Upper lobe of right lung (tissue), 1 donor: ENCODE measurements at regions of chr19 and their contacts with region 1.

Region 1: DNA sequence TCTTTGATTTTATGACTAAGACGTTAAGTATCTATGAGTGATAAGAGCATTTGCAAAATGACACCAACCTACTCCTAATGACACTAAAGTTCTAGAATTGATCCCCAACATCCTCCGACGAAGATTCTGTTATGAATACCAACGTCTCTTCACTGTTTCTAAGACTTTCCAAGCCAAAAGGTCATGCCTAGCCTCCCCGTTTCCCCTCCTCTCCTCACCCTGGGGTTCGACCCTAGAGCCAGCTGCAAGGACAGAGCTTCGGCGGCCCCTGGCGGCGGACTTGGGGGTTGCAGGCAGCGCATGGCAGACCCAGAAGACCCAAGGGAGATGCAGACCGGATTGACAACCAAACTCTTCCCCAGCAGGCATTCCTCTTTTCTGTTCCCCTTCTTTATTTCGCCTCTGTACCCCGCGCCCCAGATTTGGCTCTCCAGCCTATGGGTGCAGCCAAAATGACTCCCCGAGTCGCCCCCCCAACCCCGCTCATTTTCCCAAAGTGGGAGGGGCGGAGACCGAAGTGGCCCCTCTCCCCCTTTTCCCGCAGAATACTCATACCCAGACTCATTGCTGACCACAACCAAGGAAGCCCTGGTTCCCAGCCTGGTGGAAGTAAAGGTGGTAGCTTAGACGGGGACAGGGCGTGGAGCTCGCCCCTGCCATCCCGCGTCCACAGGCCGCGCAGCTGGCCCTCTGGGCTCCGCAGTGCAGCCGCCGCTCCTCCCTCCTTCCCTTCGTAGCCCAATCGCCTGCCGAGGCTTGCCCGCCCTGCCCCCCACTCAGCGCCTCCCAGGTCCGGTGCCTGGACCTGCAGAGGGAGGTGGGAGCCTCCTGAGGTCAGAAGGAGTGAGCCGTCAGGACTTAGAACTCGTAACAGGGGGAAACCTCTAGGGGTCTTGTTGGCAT is 4.1 kb upstream of the EML2 start:
- DNase-seq: peak; percentile 91
- ATAC-seq: peak; percentile 65
- H3K4me3 ChIP-seq: peak overlapping the region; percentile 53
- H3K27ac ChIP-seq: no peak overlapping the region
- H3K4me1 ChIP-seq: peaks cover 55% of the 10 kb centered on the region
- H3K27me3 ChIP-seq: no peaks in the 10 kb centered on the region
- CTCF ChIP-seq: peak; percentile 99

Region 2: DNA sequence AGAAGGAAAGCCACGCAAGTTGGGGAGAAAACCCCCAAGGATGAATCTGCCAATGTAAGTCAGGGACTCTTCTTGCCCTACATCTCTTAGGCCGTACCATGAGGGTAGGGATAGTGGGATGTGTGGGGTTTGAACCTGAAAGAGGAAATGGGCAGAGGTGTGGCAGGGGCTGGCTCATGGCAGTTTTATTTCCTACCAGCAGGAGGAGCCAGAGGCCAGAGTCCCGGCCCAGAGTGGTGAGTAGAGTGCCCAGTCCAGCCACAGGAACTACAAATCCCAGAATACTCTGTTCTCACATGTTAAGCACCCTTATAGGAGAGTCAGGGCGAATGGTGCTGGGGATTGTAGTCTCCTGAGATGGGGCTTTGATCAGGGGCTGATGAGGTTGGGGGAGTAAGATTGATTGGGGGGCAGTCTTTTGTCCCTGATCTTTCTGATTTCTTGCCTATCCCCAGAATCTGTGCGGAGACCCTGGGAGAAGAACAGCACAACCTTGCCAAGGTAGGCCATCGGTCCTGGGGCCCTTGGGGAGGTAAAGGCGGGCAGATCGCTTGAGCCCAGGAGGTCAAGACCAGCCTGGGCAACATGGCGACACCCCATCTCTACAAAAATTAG is 119.5 kb before region 1 on chr19:
- intact Hi-C with region 1: loop called (anchors 10 kb)
- DNase-seq: peak; percentile 82
- ATAC-seq: peak; percentile 97
- H3K4me3 ChIP-seq: no peak overlapping the region
- H3K27ac ChIP-seq: no peak overlapping the region
- H3K4me1 ChIP-seq: no peaks in the 10 kb centered on the region
- H3K27me3 ChIP-seq: no peaks in the 10 kb centered on the region
- CTCF ChIP-seq: peak; percentile 92

Region 3: DNA sequence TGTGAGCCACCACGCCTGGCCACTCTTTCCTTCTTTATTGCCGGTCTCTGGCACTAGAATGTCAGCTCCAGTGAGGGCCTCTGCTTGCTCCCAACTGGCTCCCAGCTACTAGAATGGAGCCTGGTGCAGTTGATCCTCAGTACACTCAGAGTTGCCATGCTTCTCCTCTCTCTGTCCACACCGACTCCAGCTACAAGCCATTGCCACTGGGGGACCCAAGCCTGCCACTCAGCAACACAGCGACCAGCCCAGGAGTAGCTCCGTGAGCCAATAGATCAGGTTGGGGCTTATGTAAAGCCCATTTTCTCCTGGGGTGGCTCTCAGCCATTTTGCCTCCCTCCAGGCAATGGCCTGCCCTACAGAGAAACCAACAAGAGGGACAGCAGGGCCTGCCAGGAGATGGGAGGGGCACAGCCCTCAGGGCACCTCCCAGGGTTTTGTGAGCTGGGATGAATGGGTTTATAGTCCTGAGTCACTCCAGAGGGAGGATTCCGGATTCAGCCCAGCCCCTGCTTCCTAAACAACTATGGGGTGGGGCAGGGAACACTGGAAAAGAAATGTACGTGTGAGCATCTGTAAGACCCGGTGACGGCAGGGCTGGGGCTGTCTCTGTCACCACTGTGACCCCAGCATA is 95.2 kb before region 1 on chr19:
- intact Hi-C with region 1: no loop called
- DNase-seq: no peak
- ATAC-seq: peak; percentile 68
- H3K4me3 ChIP-seq: no peak overlapping the region
- H3K27ac ChIP-seq: peak overlapping the region; percentile 17
- H3K4me1 ChIP-seq: peaks cover 3% of the 10 kb centered on the region
- H3K27me3 ChIP-seq: no peaks in the 10 kb centered on the region
- CTCF ChIP-seq: no peak

Region 4: DNA sequence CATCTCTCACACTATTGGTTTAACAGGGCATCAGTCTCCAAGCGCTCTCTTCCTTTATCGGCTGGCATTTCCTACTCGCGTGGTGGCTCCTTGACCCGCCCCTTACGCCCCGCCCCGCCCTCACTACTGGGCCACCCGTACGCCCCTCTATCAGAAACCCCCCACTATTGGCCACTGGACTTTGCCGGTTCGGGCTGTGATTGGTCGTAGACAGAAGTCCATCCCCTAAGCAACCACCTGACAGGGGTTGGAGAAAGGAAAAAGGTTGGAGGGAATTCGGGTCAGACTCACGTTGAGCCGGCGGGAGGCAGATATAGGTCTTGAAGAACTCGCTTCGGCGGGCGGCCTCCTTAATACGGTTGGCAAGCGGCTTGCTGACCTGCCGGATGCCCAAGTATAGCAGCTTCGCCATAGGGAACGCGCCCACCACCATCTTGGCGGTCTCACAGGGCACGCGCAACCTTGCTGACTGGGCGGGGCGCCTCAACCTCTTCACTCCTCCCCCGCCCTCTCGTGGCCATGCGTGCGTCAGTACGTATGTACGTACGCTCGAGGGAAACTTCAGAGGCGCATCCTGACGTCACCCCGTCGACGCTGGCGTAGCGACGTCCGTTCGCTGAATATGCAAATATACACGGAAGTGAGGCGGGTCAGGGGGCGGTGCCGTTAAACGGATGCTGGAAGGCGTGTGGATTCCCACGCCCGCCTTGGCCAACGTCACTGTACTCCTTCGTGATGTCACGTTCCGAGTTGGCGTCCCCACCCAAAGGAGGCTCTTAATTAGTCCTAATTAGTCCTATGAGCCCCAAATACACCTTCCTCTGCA is 58.7 kb before region 1 on chr19 and contains the start of gene OPA3:
- intact Hi-C with region 1: no loop called
- DNase-seq: peak; percentile 100
- ATAC-seq: peak; percentile 95
- H3K4me3 ChIP-seq: peak within 1 kb of the TSS; percentile 83
- H3K27ac ChIP-seq: peak within 1 kb of the TSS; percentile 93
- H3K4me1 ChIP-seq: peaks cover 12% of the 10 kb centered on the region
- H3K27me3 ChIP-seq: no peaks in the 10 kb centered on the region
- CTCF ChIP-seq: peak; percentile 25
- total RNA-seq, gene OPA3: 13.0 TPM

Region 5: DNA sequence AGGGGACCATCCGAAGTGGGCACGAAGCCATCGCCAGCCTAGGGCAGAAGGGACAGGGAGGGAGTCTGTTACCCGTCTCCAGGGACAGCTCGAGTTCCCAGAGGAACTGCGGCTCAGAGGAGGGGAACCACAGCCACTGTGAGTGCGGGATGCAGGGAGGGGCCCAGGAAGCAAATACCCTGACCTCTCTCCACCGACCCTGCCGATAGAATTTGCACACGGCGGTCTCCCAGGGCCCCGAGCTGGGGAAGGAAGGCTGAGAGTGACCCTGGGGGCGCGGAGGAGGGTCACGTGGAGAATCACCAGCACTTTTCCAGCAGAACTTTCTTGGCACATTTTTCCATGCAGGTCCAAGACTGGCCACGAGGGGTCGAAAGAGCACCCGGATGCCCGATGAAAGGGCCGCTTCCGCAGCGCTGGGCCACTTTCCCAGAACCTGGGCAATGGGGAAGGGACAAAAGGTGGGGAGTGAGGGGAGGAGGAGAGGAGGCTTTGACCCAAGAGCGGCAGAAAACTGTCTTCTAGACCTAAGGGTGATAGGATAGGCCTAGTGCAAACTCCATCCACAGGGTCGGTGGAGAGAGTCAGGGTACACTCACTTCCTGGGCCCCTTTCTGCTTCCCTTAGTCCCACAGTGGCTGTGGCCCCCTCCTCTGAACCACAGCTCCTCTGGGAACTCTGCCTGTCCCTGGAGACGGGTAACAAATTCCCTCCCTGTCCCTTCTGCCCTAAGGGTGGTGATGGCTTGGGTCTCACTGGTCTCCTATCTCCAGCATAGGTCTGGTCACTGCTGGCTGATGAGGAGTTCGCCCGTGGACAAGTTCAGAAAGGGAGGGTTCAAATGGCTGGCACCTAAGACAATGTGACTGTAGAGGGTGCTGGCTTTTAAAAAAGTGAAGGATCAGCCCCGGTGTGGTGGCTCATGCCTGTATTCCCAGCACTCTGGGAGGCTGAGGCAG is 35.9 kb before region 1 on chr19:
- intact Hi-C with region 1: loop called (anchors 5 kb)
- DNase-seq: peak; percentile 85
- ATAC-seq: peak; percentile 94
- H3K4me3 ChIP-seq: peak overlapping the region; percentile 28
- H3K27ac ChIP-seq: peak overlapping the region; percentile 13
- H3K4me1 ChIP-seq: peaks cover 11% of the 10 kb centered on the region
- H3K27me3 ChIP-seq: peaks cover 11% of the 10 kb centered on the region
- CTCF ChIP-seq: peak; percentile 84

Region 6: GRCh38 chr19:45681391-45682015 is 38.2 kb after region 1 on chr19:
- intact Hi-C with region 1: no loop called
- DNase-seq: peak; percentile 93
- ATAC-seq: peak; percentile 90
- H3K4me3 ChIP-seq: peak overlapping the region; percentile 42
- H3K27ac ChIP-seq: peak overlapping the region; percentile 32
- H3K4me1 ChIP-seq: peaks cover 30% of the 10 kb centered on the region
- H3K27me3 ChIP-seq: peaks cover 27% of the 10 kb centered on the region
- CTCF ChIP-seq: peak; percentile 99